K562 (cell line): ENCODE measurements at regions of chr3 and their contacts with region 1.

Region 1: DNA sequence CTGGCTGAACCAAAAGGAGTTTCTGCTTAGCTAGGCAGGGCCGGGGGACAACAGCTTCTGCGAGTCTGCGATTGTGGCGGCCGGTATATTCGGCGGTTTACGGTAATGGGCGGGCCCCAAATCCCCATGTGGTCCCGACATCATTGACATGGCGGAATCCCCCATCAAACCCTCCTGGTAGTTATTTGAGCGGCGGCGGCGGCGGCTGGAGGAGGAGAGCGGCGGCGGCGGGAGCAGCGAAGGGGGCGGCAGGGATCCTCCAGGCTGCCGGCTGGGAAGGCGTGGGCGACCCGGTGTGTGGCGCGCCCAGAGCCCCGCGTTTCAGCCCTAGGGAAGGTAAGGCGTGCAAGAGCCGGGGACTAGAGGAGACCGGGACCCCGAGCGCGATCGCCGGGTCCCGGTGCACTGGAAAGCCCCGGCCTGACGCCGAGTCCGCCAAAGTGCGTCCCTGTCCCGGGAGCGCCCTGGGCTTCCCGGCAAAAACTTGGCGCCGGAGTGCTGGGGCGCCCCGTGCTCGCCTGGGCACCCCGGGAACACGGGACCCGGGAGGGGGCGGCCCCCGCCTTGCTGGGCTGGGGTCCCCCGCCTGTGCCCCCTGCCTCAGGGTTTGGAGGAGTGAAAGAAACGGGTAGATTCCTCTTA is at the start of gene FNDC3B:
- DNase-seq: peak; percentile 77 to 97 (median 83)
- ATAC-seq: peak; percentile 82
- H3K4me3 ChIP-seq: peak within 1 kb of the TSS; percentile 81
- H3K27ac ChIP-seq: peak within 1 kb of the TSS; percentile 88
- H3K4me1 ChIP-seq: peaks cover 35 to 37% of the 10 kb centered on the region in 2 experiments
- H3K27me3 ChIP-seq: no peaks in the 10 kb centered on the region
- CTCF ChIP-seq: no peak; a peak in 1 of 6 replicates
- EP300 ChIP-seq: peak; percentile 67
- POLR2A ChIP-seq: peak; percentile 89
- RAD21 ChIP-seq: peak in 1 of 2 experiments; percentile 44
- polyA plus RNA-seq, gene FNDC3B: 7.0 to 10.5 TPM

Region 2: GRCh38 chr3:171788546-171789351 is 250.8 kb before region 1 on chr3:
- CTCF ChIA-PET with region 1: no interaction called
- POLR2A ChIA-PET with region 1: no interaction called
- in situ Hi-C with region 1: no loop called
- intact Hi-C with region 1: no loop called
- DNase-seq: peak in 1 of 4 experiments; percentile 46
- ATAC-seq: peak; percentile 52
- H3K4me3 ChIP-seq: no peak overlapping the region
- H3K27ac ChIP-seq: no peak overlapping the region
- H3K4me1 ChIP-seq: peaks cover 6 to 28% of the 10 kb centered on the region in 2 experiments; a peak in 4 of 5 replicates
- H3K27me3 ChIP-seq: no peaks in the 10 kb centered on the region
- CTCF ChIP-seq: peak in 2 of 3 experiments; percentile 42 to 48; a peak in 4 of 6 replicates
- EP300 ChIP-seq: no peak
- POLR2A ChIP-seq: no peak
- RAD21 ChIP-seq: peak in 1 of 2 experiments; percentile 47; a peak in 2 of 4 replicates

Region 3: GRCh38 chr3:171935261-171935974 is 104.1 kb before region 1 on chr3:
- CTCF ChIA-PET with region 1: no interaction called
- POLR2A ChIA-PET with region 1: interaction called, 5 read pairs
- in situ Hi-C with region 1: no loop called
- intact Hi-C with region 1: loop called (anchors 1 kb)
- DNase-seq: peak; percentile 20 to 68 (median 44)
- ATAC-seq: peak; percentile 78
- H3K4me3 ChIP-seq: no peak overlapping the region
- H3K27ac ChIP-seq: no peak overlapping the region
- H3K4me1 ChIP-seq: peaks cover 6 to 13% of the 10 kb centered on the region in 2 experiments; a peak in 4 of 5 replicates
- H3K27me3 ChIP-seq: no peaks in the 10 kb centered on the region
- CTCF ChIP-seq: no peak
- EP300 ChIP-seq: no peak; the same call in 1 of the 2 replicates
- POLR2A ChIP-seq: no peak
- RAD21 ChIP-seq: peak in 1 of 2 experiments; percentile 24; a peak in 1 of 4 replicates

Region 4: GRCh38 chr3:171967137-171967783 is 72.3 kb before region 1 on chr3:
- CTCF ChIA-PET with region 1: no interaction called
- POLR2A ChIA-PET with region 1: interaction called, 4 read pairs
- in situ Hi-C with region 1: no loop called
- intact Hi-C with region 1: loop called (anchors 2 kb)
- DNase-seq: peak in 2 of 4 experiments; percentile 56 to 71
- ATAC-seq: peak; percentile 80
- H3K4me3 ChIP-seq: no peak overlapping the region
- H3K27ac ChIP-seq: peak overlapping the region; percentile 85
- H3K4me1 ChIP-seq: peaks cover 0 to 33% of the 10 kb centered on the region in 2 experiments; a peak in 3 of 5 replicates
- H3K27me3 ChIP-seq: no peaks in the 10 kb centered on the region
- CTCF ChIP-seq: no peak
- EP300 ChIP-seq: peak; percentile 96
- POLR2A ChIP-seq: no peak
- RAD21 ChIP-seq: peak; percentile 39 to 46

Region 5: GRCh38 chr3:172065967-172066762 is 26.6 kb after region 1 on chr3:
- CTCF ChIA-PET with region 1: no interaction called
- POLR2A ChIA-PET with region 1: interaction called, 11 read pairs
- in situ Hi-C with region 1: no loop called
- intact Hi-C with region 1: no loop called
- DNase-seq: no peak
- ATAC-seq: peak; percentile 33
- H3K4me3 ChIP-seq: no peak overlapping the region
- H3K27ac ChIP-seq: peak overlapping the region; percentile 92
- H3K4me1 ChIP-seq: peaks cover 11 to 57% of the 10 kb centered on the region in 2 experiments
- H3K27me3 ChIP-seq: no peaks in the 10 kb centered on the region
- CTCF ChIP-seq: no peak
- EP300 ChIP-seq: no peak
- POLR2A ChIP-seq: no peak
- RAD21 ChIP-seq: 0 out of 4 replicates have a peak, but pooled peaks of 1 of the 2 experiments have one; percentile 1

Region 6: DNA sequence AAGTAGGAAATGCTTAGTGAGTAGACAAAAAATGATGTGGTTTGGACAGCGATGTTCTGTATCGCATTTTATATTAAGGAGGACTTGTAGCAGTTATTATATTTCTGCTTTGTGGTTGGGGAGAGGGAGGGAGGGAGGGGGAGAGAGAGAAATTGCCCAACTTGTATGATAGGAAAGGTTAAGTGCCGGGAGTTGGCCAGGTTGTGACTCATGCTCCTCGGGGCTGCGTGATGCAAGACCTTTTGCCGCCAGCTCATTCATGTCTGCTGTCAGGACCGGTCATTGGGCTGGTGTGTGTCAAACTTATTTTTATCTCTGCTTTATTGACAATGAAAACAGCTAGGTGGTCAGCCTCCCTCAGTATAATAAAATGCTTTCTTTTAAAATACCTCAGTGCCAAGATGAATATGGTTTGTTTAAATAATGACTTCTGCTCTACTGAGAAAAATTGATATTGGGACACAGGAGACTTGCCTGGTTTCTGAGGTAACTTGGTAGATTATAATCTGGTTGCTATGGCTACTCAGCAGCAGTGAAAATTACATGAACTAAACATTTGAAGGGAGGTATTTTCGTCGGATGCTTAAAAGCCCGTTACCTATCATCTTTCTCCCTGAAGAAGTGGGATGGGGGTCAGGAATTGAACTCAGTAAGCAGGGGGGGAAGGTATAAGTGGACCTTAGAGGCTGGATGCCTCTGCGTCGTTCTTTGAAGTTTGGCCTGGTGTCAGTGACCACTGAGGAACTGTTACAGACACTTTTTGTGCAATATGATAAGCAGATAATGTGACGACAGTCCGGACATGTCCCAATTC is 90.5 kb after region 1 on chr3:
- CTCF ChIA-PET with region 1: no interaction called
- POLR2A ChIA-PET with region 1: interaction called, 3 read pairs
- in situ Hi-C with region 1: no loop called
- intact Hi-C with region 1: loop called (anchors 5 kb)
- DNase-seq: peak; percentile 81 to 93 (median 86)
- ATAC-seq: peak; percentile 97
- H3K4me3 ChIP-seq: no peak overlapping the region
- H3K27ac ChIP-seq: peak overlapping the region; percentile 79
- H3K4me1 ChIP-seq: peaks cover 4 to 15% of the 10 kb centered on the region in 2 experiments; a peak in 4 of 5 replicates
- H3K27me3 ChIP-seq: no peaks in the 10 kb centered on the region
- CTCF ChIP-seq: no peak
- EP300 ChIP-seq: peak; percentile 89
- POLR2A ChIP-seq: no peak
- RAD21 ChIP-seq: no peak; a peak in 1 of 4 replicates